Gastrocnemius medialis (tissue), 4 donors: ENCODE measurements at regions of chr5 and their contacts with region 1.

Region 1: GRCh38 chr5:133423618-133424282 is 188.6 kb downstream of the FSTL4 start:
- DNase-seq: peak; percentile 26 to 29
- ATAC-seq: peak; percentile 50 to 72
- H3K4me3 ChIP-seq: no peak overlapping the region
- H3K27ac ChIP-seq: no peak overlapping the region
- H3K4me1 ChIP-seq: no peaks in the 10 kb centered on the region
- H3K27me3 ChIP-seq: no peaks in the 10 kb centered on the region
- CTCF ChIP-seq: peak; percentile 76 to 88 (median 81)
- POLR2A ChIP-seq: no peak

Region 2: DNA sequence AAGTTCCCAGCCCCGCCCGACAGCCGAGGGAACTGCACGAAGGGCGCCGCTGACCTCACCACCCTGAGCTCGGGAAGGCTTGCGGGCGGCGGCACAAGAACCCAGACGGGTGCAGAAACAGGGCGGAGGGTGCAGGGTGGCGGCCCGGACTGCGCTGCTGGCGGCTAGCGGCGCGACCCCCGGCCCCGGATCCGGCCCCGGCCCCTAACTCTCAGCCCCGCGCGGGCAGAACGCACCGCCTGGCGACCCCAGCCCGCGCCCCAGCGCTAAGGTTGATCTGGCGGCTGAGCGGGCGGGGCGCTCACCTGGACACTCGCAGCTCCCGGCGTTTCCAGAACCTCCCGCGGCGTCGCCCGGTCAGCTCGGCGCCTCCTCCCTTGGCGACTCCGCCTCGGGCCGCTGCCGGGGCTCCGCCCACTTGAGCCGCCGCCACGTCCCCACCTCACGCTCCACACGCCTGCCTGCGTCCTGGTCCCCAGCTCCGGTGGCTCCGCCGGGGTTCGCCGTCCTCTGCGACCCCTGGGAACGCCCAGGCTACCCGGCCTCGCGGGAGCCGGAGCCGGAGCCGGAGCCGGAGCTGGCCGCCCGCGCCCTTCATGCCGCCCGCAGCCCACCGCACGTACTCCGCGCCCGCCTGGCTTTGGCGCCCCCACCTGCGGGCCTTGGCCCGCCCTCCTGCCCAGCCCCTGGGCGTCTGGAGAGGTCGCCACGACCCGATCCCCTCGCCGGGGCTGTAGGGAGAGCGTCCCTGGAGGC is 1196.1 kb before region 1 on chr5 and contains the start of gene P4HA2:
- in situ Hi-C with region 1: no loop called
- intact Hi-C with region 1: no loop called
- DNase-seq: peak; percentile 64 to 78
- ATAC-seq: peak; percentile 81 to 91
- H3K4me3 ChIP-seq: peak within 1 kb of the TSS; percentile 67 to 80 (median 72)
- H3K27ac ChIP-seq: peak within 1 kb of the TSS; percentile 74 to 88 (median 84)
- H3K4me1 ChIP-seq: peaks cover 34 to 35% of the 10 kb centered on the region in 2 donors
- H3K27me3 ChIP-seq: no peaks in the 10 kb centered on the region
- CTCF ChIP-seq: peak in 3 of 5 experiments; percentile 18 to 26 (median 20)
- POLR2A ChIP-seq: peak; percentile 64 to 70
- total RNA-seq, gene P4HA2: 5.8 to 15.7 (median 10.3) TPM

Region 3: DNA sequence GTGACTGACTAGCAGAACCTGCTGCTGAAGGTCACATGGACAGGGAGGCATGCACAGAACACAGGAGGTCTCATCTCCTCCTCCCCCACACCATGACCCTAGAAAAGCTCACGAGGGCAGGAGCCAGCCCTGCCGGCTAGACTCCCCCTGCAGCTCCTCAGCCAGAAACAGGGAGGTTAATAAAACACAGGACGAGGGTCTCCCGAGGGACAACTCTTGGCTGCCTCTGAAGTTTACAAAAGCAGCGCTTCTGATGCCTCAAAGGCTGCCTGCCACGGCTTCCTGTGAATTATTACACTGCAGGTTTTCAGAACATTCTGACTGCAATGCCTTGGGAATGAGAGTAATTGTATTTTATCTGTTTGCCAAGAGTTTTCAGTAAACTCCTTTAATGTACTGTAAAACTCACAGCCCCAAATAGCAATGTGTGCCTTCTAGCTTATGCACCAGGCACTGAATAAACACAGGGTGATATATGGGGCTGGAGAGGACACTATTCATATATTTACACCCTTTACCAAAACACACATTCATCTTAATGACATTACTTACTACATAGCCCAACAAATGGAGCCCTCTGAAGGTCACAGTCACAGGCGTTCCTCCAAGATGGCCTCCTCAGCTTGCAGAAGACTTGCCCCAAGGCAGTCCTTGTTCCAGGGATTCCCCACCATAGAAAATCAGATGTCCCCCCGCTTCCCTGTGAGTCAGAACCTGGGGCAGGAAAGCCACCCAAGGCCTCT is 461.0 kb after region 1 on chr5:
- in situ Hi-C with region 1: loop called in 1 of 4 experiments (anchors 25 kb)
- intact Hi-C with region 1: no loop called
- DNase-seq: no peak
- ATAC-seq: no peak
- H3K4me3 ChIP-seq: no peak overlapping the region
- H3K27ac ChIP-seq: no peak overlapping the region
- H3K4me1 ChIP-seq: no peaks in the 10 kb centered on the region
- H3K27me3 ChIP-seq: no peaks in the 10 kb centered on the region
- CTCF ChIP-seq: no peak
- POLR2A ChIP-seq: no peak

Region 4: GRCh38 chr5:133944263-133945185 is 520.8 kb after region 1 on chr5:
- in situ Hi-C with region 1: no loop called
- intact Hi-C with region 1: loop called (anchors 10 kb)
- DNase-seq: no peak
- ATAC-seq: peak in 1 of 2 donors; percentile 44
- H3K4me3 ChIP-seq: no peak overlapping the region
- H3K27ac ChIP-seq: no peak overlapping the region
- H3K4me1 ChIP-seq: peaks cover 0 to 5% of the 10 kb centered on the region in 2 donors
- H3K27me3 ChIP-seq: no peaks in the 10 kb centered on the region
- CTCF ChIP-seq: peak in 4 of 5 experiments; percentile 15 to 63 (median 46)
- POLR2A ChIP-seq: no peak